Kidney (tissue), 22 donors: ENCODE measurements at regions of chr11 and their contacts with region 1.

Region 1: GRCh38 chr11:134033696-134034491 is 35.0 kb upstream of the JAM3 start:
- DNase-seq: peak; percentile 91 to 97 (median 93)
- H3K4me3 ChIP-seq: no peak overlapping the region
- H3K27ac ChIP-seq: peak overlapping the region in 1 of 2 donors; percentile 48
- H3K4me1 ChIP-seq: peaks cover 2 to 17% (median 3%) of the 10 kb centered on the region in 3 donors
- H3K27me3 ChIP-seq: no peaks in the 10 kb centered on the region
- CTCF ChIP-seq: no peak

Region 2: GRCh38 chr11:133762538-133762937 is 271.4 kb before region 1 on chr11:
- intact Hi-C with region 1: no loop called
- DNase-seq: no peak
- H3K4me3 ChIP-seq: no peak overlapping the region
- H3K27ac ChIP-seq: no peak overlapping the region
- H3K4me1 ChIP-seq: no peaks in the 10 kb centered on the region
- H3K27me3 ChIP-seq: no peaks in the 10 kb centered on the region
- CTCF ChIP-seq: no peak

Region 3: GRCh38 chr11:133956650-133957633 is 77.0 kb before region 1 on chr11 and contains the start of gene IGSF9B:
- intact Hi-C with region 1: loop called (anchors 10 kb)
- DNase-seq: peak; percentile 92 to 94 (median 94)
- H3K4me3 ChIP-seq: peak within 1 kb of the TSS; percentile 86 to 91 (median 90)
- H3K27ac ChIP-seq: peak within 1 kb of the TSS in 1 of 2 donors; percentile 63
- H3K4me1 ChIP-seq: peaks cover 0 to 10% (median 2%) of the 10 kb centered on the region in 3 donors
- H3K27me3 ChIP-seq: peaks cover 14% of the 10 kb centered on the region
- CTCF ChIP-seq: no peak
- total RNA-seq, gene IGSF9B: 10.4 TPM

Region 4: GRCh38 chr11:134004496-134005172 is 29.3 kb before region 1 on chr11:
- intact Hi-C with region 1: no loop called
- DNase-seq: peak in 3 of 5 donors; percentile 49 to 88 (median 68)
- H3K4me3 ChIP-seq: no peak overlapping the region
- H3K27ac ChIP-seq: no peak overlapping the region
- H3K4me1 ChIP-seq: no peaks in the 10 kb centered on the region
- H3K27me3 ChIP-seq: no peaks in the 10 kb centered on the region
- CTCF ChIP-seq: no peak